K562 (cell line): ENCODE measurements at regions of chr12 and their contacts with region 1.

Region 1: GRCh38 chr12:106955377-106956047 is at the start of gene TMEM263:
- DNase-seq: peak; percentile 95 to 98 (median 97)
- ATAC-seq: peak; percentile 85
- H3K4me3 ChIP-seq: peak within 1 kb of the TSS; percentile 85
- H3K27ac ChIP-seq: peak within 1 kb of the TSS; percentile 87
- H3K4me1 ChIP-seq: peaks cover 0 to 18% of the 10 kb centered on the region in 2 experiments; a peak in 3 of 5 replicates
- H3K27me3 ChIP-seq: no peaks in the 10 kb centered on the region
- CTCF ChIP-seq: 0 out of 6 replicates have a peak, but pooled peaks of 1 of the 3 experiments have one; percentile 13
- EP300 ChIP-seq: no peak
- POLR2A ChIP-seq: peak; percentile 81
- RAD21 ChIP-seq: 0 out of 4 replicates have a peak, but pooled peaks of 1 of the 2 experiments have one; percentile 8
- polyA plus RNA-seq, gene TMEM263: 14.8 to 17.8 TPM

Region 2: DNA sequence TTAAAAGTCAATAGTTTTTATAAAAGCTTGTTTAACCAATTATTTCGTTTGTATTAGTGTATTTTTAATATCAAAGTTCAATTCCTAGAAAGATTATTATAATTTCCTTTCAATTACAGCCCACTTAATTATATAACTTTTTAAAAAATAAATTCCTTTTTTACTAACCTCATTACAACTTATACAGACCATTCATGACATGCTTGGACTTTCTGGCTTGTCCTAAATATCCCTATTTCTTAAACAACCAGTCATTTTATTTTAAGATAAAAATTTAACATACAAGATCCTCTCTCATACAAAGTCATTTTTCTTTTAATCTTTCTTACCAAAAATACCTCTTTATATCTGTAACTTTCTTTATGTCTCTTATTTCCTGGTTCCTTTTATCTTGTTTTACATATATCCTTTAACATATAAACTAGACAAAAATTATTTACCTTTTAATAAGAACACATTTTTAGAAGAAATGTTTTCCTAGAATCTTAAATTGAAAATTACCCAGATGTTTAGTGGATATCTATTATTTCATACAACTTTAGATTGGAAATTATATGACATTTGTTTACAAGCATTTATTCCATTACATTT is 10.2 kb before region 1 on chr12:
- CTCF ChIA-PET with region 1: no interaction called
- POLR2A ChIA-PET with region 1: interaction called, 17 read pairs
- in situ Hi-C with region 1: no loop called
- intact Hi-C with region 1: no loop called
- DNase-seq: peak in 1 of 4 experiments; percentile 31
- ATAC-seq: no peak
- H3K4me3 ChIP-seq: no peak overlapping the region
- H3K27ac ChIP-seq: no peak overlapping the region
- H3K4me1 ChIP-seq: peaks cover 10 to 28% of the 10 kb centered on the region in 2 experiments; a peak in 4 of 5 replicates
- H3K27me3 ChIP-seq: no peaks in the 10 kb centered on the region
- CTCF ChIP-seq: no peak
- EP300 ChIP-seq: no peak
- POLR2A ChIP-seq: no peak
- RAD21 ChIP-seq: no peak

Region 3: DNA sequence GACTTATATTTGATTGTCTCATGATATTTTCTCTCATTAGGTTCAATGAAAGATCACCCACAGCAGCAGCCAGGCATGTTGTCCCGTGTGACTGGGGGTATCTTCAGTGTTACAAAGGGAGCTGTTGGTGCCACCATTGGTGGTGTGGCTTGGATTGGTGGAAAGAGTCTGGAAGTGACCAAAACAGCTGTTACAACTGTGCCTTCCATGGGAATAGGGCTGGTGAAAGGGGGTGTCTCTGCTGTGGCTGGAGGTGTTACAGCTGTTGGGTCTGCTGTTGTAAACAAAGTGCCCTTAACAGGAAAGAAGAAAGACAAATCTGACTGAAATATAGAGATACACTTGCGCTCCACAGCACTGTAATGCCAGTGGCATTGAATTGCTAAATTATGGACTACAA is 15.6 kb after region 1 on chr12:
- CTCF ChIA-PET with region 1: no interaction called
- POLR2A ChIA-PET with region 1: interaction called, 23 read pairs
- in situ Hi-C with region 1: no loop called
- intact Hi-C with region 1: loop called (anchors 2 kb)
- DNase-seq: no peak
- ATAC-seq: no peak
- H3K4me3 ChIP-seq: no peak overlapping the region
- H3K27ac ChIP-seq: peak overlapping the region; percentile 5; the same call in 1 of the 3 replicates
- H3K4me1 ChIP-seq: peaks cover 2 to 22% of the 10 kb centered on the region in 2 experiments
- H3K27me3 ChIP-seq: no peaks in the 10 kb centered on the region
- CTCF ChIP-seq: no peak
- EP300 ChIP-seq: no peak
- POLR2A ChIP-seq: no peak
- RAD21 ChIP-seq: no peak

Region 4: DNA sequence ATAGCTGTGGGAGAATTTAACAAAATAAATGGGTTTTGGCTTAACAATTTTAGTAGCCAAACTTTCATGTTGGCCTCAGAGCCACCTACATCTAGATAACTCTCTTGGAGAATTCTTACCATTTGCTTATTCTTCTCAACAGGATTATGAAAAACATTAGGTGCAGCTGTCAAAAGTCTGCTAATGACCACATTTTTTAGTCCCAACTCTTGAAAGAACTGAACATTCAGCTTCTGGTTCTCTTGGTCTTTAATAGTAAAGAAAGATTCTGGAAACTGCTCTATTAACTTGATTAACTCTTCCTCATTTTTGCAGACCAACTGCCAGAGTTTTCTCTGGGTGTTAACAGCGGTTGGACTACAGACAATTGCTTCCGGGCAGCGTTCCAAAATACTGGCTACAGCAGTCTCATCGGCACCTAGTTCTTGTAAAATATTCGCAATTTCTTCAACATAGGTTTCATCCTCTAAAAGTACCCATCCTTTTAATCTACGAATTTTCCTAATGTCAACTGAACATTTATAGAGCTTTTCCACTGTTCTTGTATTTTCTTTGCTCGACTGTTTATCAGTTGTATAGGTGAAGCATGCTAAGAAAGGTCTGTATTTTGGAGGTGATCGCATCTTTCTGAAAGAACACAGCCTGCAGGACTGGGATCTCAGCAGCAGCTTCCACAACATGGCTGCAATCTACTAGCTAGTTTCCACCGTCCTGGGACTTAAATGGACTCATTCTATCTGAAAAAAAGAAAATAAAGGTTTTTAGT is 22.7 kb after region 1 on chr12:
- CTCF ChIA-PET with region 1: no interaction called
- POLR2A ChIA-PET with region 1: interaction called, 28 read pairs
- in situ Hi-C with region 1: no loop called
- intact Hi-C with region 1: loop called (anchors 2 kb)
- DNase-seq: peak in 2 of 4 experiments; percentile 42 to 83
- ATAC-seq: peak; percentile 65
- H3K4me3 ChIP-seq: no peak overlapping the region
- H3K27ac ChIP-seq: peak overlapping the region; percentile 63; the same call in 2 of the 3 replicates
- H3K4me1 ChIP-seq: peaks cover 7 to 52% of the 10 kb centered on the region in 2 experiments
- H3K27me3 ChIP-seq: no peaks in the 10 kb centered on the region
- CTCF ChIP-seq: no peak
- EP300 ChIP-seq: 0 out of 2 replicates have a peak, but pooled peaks have one; percentile 26
- POLR2A ChIP-seq: no peak
- RAD21 ChIP-seq: no peak

Region 5: DNA sequence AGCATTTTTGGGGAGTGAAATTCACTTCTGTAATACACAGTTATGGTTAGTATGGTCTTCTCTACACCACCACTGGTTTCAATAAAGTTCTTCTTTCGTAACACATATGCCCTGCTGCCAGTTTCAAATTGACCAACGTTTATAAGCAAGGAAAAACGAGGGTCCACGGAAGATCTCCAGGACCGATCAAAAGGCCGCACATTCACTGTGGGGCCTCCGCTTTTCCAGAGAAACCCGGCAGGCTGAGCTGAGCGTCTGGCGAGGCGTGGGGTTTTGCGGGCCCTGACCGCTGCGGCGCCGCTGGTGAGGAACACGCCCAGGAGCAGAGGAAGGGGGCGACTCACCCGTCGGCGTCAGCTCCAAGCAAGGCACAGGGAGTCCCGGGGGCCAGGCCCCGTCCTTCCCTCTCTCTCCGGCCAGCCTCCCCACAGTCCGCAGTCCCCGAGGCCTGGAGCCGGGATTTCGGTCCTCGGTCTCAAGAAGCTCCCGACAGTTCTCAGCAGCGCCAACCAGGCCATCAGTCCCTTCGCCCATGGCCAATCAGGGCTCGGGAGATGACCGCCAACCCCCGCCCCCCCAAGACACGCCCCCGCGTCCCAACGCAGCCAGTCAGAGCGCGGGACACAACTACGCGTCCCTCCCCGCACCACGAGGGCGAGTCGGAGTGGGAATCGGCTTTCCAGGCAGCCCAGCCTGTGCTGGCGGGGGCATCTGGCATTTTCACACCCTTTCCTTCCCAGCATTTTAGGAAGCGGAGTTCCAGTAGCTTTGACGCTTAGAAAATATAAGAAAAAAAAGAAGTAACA is 31.3 kb after region 1 on chr12 and contains the start of gene MTERF2:
- CTCF ChIA-PET with region 1: no interaction called
- POLR2A ChIA-PET with region 1: interaction called, 28 read pairs
- in situ Hi-C with region 1: no loop called
- intact Hi-C with region 1: loop called (anchors 2 kb)
- DNase-seq: peak; percentile 97 to 98 (median 98)
- ATAC-seq: peak; percentile 96
- H3K4me3 ChIP-seq: peak within 1 kb of the TSS; percentile 64
- H3K27ac ChIP-seq: peak within 1 kb of the TSS; percentile 85
- H3K4me1 ChIP-seq: peaks cover 16 to 25% of the 10 kb centered on the region in 2 experiments
- H3K27me3 ChIP-seq: no peaks in the 10 kb centered on the region
- CTCF ChIP-seq: no peak
- EP300 ChIP-seq: no peak
- POLR2A ChIP-seq: peak; percentile 85
- RAD21 ChIP-seq: 0 out of 4 replicates have a peak, but pooled peaks of 1 of the 2 experiments have one; percentile 7
- polyA plus RNA-seq, gene MTERF2: 10.0 to 11.6 TPM